HepG2 (cell line): ENCODE measurements at regions of chr1 and their contacts with region 1.

Region 1: GRCh38 chr1:45755697-45756096 is 5.2 kb upstream of the IPP start:
- DNase-seq: no peak
- ATAC-seq: no peak
- H3K4me3 ChIP-seq: no peak overlapping the region
- H3K27ac ChIP-seq: no peak overlapping the region
- H3K4me1 ChIP-seq: peaks cover 46% of the 10 kb centered on the region
- H3K27me3 ChIP-seq: peaks cover 0 to 22% of the 10 kb centered on the region in 2 experiments; a peak in 2 of 5 replicates
- CTCF ChIP-seq: no peak
- EP300 ChIP-seq: no peak
- POLR2A ChIP-seq: no peak
- RAD21 ChIP-seq: no peak

Region 2: DNA sequence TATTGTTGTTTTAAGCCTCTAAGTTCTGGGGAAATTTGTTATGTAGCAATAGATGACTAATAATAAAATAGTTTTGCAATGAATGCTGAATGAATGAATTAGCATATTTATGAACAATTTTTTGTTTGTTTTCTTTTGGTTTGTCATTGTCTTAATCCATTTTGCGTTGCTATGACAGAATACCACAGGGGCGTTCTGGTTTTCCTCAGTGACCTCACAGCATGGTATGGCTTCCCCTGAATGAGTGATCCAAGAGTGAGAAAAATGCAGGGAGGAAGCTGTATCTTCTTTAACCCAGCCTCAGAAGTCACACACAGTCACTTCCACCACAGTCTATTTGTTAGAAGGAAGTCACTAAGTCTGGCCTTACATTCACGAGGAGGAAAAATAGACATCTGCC is 482.7 kb before region 1 on chr1:
- CTCF ChIA-PET with region 1: no interaction called
- POLR2A ChIA-PET with region 1: no interaction called
- in situ Hi-C with region 1: no loop called
- intact Hi-C with region 1: no loop called
- DNase-seq: no peak
- ATAC-seq: no peak
- H3K4me3 ChIP-seq: no peak overlapping the region
- H3K27ac ChIP-seq: no peak overlapping the region
- H3K4me1 ChIP-seq: peaks cover 49% of the 10 kb centered on the region
- H3K27me3 ChIP-seq: no peaks in the 10 kb centered on the region; a peak in 1 of 5 replicates
- CTCF ChIP-seq: no peak
- EP300 ChIP-seq: no peak
- POLR2A ChIP-seq: no peak
- RAD21 ChIP-seq: no peak

Region 3: DNA sequence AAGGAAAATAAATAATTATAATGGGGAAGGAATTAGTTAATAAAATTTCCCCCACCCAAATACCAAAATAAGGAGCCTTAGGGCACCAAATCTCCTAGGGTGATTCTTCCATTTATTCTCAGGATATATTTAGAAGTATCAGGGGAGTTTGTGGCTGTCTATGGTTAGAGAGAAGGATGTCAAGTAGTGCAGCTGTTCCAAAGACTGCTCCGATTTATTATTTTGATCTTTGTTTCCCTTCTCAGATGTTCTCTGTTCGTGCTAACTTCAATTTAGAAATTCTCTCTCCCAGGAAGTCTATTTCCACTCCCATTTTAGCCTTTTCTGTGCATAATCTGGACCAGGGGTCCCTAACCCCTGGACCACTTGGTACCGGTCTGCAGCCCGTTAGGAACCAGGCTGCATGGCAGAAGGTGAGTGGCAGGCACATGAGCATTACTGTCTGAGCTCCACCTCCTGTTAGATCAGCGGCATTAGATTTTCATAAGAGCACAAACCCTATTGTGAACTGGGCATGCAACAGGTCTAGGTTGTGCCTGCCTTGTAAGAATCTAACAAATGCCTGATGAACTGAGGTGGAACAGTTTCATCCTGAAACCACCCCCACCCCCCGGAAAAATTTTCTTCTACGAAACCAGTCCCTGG is 38.4 kb after region 1 on chr1:
- CTCF ChIA-PET with region 1: no interaction called
- POLR2A ChIA-PET with region 1: no interaction called
- in situ Hi-C with region 1: no loop called
- intact Hi-C with region 1: loop called (anchors 5 kb)
- DNase-seq: peak; percentile 32
- ATAC-seq: peak; percentile 91
- H3K4me3 ChIP-seq: peak overlapping the region; percentile 43 to 58 (median 51)
- H3K27ac ChIP-seq: no peak overlapping the region
- H3K4me1 ChIP-seq: peaks cover 11% of the 10 kb centered on the region
- H3K27me3 ChIP-seq: no peaks in the 10 kb centered on the region; a peak in 1 of 5 replicates
- CTCF ChIP-seq: peak; percentile 62
- EP300 ChIP-seq: no peak
- POLR2A ChIP-seq: no peak
- RAD21 ChIP-seq: peak; percentile 52; the same call in 1 of the 2 replicates